Activated B cell treated with CpG ODN at 0.5 μM for 24 hours (primary cell): ENCODE measurements at regions of chr3 and their contacts with region 1.

Region 1: DNA sequence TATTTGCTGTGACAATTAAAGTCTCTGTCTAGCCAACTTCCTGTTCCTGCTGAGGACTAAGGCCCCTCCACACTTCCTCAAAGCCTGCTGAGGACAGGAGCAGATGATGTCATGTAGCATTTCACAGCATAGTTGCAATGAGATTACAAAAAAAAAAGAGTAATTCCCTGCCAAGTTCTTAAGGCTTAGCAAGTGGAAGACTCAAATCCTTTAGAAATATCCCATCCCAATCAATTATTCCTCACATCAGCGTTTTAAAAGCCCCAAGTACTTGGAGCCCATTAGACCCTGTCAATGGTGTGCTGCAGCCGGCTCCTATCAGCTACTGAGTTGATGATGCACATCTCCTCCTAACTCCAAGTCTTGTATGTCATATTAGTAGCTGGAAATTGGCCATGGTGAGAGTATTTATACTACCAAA is 51.7 kb downstream of the TRANK1 start:
- DNase-seq: no peak
- ATAC-seq: peak; percentile 35
- H3K4me3 Mint-ChIP-seq: peak overlapping the region; percentile 78
- H3K27ac Mint-ChIP-seq: peak overlapping the region; percentile 97
- H3K4me1 Mint-ChIP-seq: peaks cover 94% of the 10 kb centered on the region
- H3K27me3 Mint-ChIP-seq: no peaks in the 10 kb centered on the region
- CTCF ChIP-seq: no peak

Region 2: GRCh38 chr3:36868614-36869436 is 24.3 kb before region 1 on chr3:
- CTCF ChIA-PET with region 1: interaction called, 18 read pairs
- POLR2A ChIA-PET with region 1: interaction called, 4 read pairs
- intact Hi-C with region 1: no loop called
- DNase-seq: no peak
- ATAC-seq: peak; percentile 88
- H3K4me3 Mint-ChIP-seq: no peak overlapping the region
- H3K27ac Mint-ChIP-seq: peak overlapping the region; percentile 59
- H3K4me1 Mint-ChIP-seq: peaks cover 23% of the 10 kb centered on the region
- H3K27me3 Mint-ChIP-seq: no peaks in the 10 kb centered on the region
- CTCF ChIP-seq: peak; percentile 87

Region 3: GRCh38 chr3:36881735-36882134 is 11.4 kb before region 1 on chr3:
- CTCF ChIA-PET with region 1: interaction called, 11 read pairs
- POLR2A ChIA-PET with region 1: interaction called, 27 read pairs
- intact Hi-C with region 1: loop called (anchors 1 kb)
- DNase-seq: no peak
- ATAC-seq: no peak
- H3K4me3 Mint-ChIP-seq: no peak overlapping the region
- H3K27ac Mint-ChIP-seq: peak overlapping the region; percentile 3
- H3K4me1 Mint-ChIP-seq: peaks cover 43% of the 10 kb centered on the region
- H3K27me3 Mint-ChIP-seq: no peaks in the 10 kb centered on the region
- CTCF ChIP-seq: no peak

Region 4: GRCh38 chr3:36918050-36918449 is 24.9 kb after region 1 on chr3:
- CTCF ChIA-PET with region 1: interaction called, 26 read pairs
- POLR2A ChIA-PET with region 1: interaction called, 84 read pairs
- intact Hi-C with region 1: no loop called
- DNase-seq: no peak
- ATAC-seq: peak; percentile 67
- H3K4me3 Mint-ChIP-seq: peak overlapping the region; percentile 83
- H3K27ac Mint-ChIP-seq: peak overlapping the region; percentile 91
- H3K4me1 Mint-ChIP-seq: peaks cover 62% of the 10 kb centered on the region
- H3K27me3 Mint-ChIP-seq: no peaks in the 10 kb centered on the region
- CTCF ChIP-seq: no peak

Region 5: GRCh38 chr3:36988356-36988755 is 95.2 kb after region 1 on chr3:
- CTCF ChIA-PET with region 1: interaction called, 4 read pairs
- POLR2A ChIA-PET with region 1: interaction called, 32 read pairs
- intact Hi-C with region 1: loop called (anchors 1 kb)
- DNase-seq: no peak
- ATAC-seq: no peak
- H3K4me3 Mint-ChIP-seq: peak overlapping the region; percentile 76
- H3K27ac Mint-ChIP-seq: peak overlapping the region; percentile 65
- H3K4me1 Mint-ChIP-seq: peaks cover 37% of the 10 kb centered on the region
- H3K27me3 Mint-ChIP-seq: no peaks in the 10 kb centered on the region
- CTCF ChIP-seq: no peak